Dorsolateral prefrontal cortex (tissue), 120 donors: ENCODE measurements at regions of chr9 and their contacts with region 1.

Region 1: DNA sequence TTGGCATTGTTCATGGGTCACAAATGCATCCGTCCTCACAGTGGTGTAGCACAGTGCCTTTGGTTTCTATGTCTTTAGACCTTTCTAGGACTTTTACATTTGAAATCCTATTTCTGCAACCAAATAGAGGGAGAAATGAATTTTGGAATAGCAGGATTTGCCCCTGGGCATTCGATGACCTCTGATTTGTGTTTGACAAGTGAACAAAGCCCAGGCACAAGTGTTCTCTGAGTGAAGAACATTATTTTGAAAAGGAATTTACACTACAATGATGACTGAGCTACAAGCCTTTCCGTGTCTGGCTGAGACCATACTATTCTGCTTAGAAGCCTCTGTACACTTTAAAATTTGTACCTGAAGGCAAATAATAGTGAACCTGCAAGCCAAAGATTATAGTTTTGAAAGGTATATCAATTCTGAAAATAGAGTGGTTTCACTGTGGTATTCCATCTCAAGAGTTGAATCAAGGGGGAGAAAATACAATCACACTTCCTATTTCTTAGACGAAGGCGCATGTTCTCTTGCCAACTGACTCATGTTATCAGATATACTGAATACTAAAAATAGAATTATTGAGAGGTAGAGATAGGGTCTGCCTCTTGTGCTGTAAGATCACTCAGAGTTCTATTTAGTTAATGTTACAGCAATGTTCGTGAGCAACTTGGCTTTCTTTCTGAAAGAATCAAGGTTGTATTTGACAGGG is 297.6 kb downstream of the KDM4C start:
- DNase-seq: no peak
- H3K4me3 ChIP-seq: no peak overlapping the region
- H3K27ac ChIP-seq: no peak overlapping the region
- H3K27me3 ChIP-seq: no peaks in the 10 kb centered on the region
- CTCF ChIP-seq: no peak

Region 2: GRCh38 chr9:6955251-6955921 is 100.0 kb before region 1 on chr9:
- intact Hi-C with region 1: loop called in 1 of 2 experiments (anchors 10 kb)
- DNase-seq: peak in 4 of 10 donors; percentile 14 to 63 (median 43)
- H3K4me3 ChIP-seq: peak overlapping the region in 15 of 59 donors; percentile 1 to 27 (median 10)
- H3K27ac ChIP-seq: peak overlapping the region in 56 of 59 donors; percentile 6 to 85 (median 67)
- H3K27me3 ChIP-seq: no peaks in the 10 kb centered on the region
- CTCF ChIP-seq: no peak

Region 3: DNA sequence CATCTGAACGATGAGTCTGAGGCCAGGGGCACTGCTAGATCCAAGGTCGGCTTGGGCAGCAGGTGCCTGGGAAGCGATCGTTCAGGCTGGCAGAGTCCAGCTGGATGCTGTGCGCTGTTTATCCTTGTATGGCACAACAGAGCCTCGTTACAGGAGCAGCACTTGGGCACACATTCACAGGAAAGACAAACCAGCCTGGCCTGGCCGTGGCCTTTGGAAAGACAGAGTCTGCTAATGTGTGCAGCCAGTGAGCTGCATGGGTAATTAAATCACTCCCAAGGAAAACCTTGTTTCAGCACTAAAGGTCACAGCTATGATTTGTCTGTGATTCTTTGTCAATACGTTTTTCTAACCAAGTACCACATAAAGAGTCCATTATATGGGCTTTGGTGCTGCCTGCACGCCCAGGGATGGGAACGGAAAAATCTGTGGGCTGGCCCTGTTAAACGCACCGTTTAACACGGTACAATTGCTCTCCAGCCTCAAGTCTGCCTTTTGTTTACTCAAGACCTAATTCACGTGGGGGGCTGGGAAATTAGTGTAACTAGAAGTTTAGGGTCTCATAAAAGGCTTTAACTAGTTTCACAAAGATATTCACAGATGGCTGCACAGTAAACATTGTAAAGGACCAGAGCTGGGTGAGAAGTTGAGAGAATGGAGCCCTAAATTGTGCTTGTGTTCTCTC is 211.7 kb after region 1 on chr9:
- intact Hi-C with region 1: loop called in 1 of 2 experiments (anchors 10 kb)
- DNase-seq: peak in 9 of 10 donors; percentile 6 to 72 (median 52)
- H3K4me3 ChIP-seq: peak overlapping the region in 1 of 59 donors; percentile 16
- H3K27ac ChIP-seq: peak overlapping the region in 35 of 59 donors; percentile 8 to 70 (median 31)
- H3K27me3 ChIP-seq: no peaks in the 10 kb centered on the region
- CTCF ChIP-seq: no peak

Region 4: DNA sequence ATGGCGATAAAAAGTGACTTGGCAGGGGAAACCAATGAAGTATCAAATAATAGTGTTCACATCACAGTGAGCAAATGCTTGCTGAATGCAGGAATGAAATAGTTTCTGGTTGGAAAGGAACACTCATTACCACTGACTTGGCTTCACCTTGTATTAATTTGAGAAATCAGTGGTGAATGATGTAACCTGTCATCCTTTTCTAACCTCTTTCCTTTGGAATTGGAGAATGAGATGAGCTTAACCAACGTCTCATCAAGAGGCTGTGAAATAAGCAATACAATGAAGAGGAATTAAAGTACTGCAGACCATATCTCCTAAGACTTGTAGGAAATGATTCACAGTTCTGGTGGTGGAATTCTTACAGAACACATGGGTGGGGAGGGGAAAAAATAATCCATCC is 552.1 kb after region 1 on chr9:
- intact Hi-C with region 1: no loop called
- DNase-seq: no peak
- H3K4me3 ChIP-seq: no peak overlapping the region
- H3K27ac ChIP-seq: no peak overlapping the region
- H3K27me3 ChIP-seq: no peaks in the 10 kb centered on the region
- CTCF ChIP-seq: no peak